Activated T-helper 1 cell treated with anti-CD3 and anti-CD28 coated beads, Interleukin-12 subunit alpha, Interleukin-12 subunit beta, Interleukin-2, Interleukin-4 antibody, amounts not matched to agents 30 ng/mL and 10 ng/mL and 1 ng/mL, durations not matched to agents 14 hours and 24 hours and 36 hours (primary cell): ENCODE measurements at regions of chr1 and their contacts with region 1.

Region 1: GRCh38 chr1:29235955-29236684 is at the start of gene PTPRU:
- DNase-seq: peak; percentile 75
- H3K4me3 Mint-ChIP-seq: peak within 1 kb of the TSS; percentile 73
- H3K27ac Mint-ChIP-seq: peak within 1 kb of the TSS; percentile 16
- H3K4me1 Mint-ChIP-seq: peaks cover 17% of the 10 kb centered on the region
- H3K27me3 Mint-ChIP-seq: peaks cover 51% of the 10 kb centered on the region
- total RNA-seq, gene PTPRU: 0.67 and 0.76 TPM in 2 replicates

Region 2: DNA sequence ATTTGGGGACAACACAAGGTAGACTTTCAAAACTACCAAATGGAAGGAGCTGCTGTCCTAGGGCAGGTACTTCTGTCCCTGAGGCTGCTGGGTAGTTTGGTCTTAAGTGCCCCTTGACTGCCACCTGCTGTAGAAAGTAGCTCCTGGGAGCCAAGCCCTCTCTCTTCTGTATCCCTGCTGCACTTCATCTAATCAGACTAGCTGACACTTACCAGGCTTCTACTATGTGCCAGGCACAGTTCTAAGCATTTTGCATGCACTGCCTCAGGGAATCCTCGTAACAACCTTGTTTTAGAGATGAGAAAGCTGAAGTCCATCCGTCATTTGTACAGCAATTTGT is 38.6 kb before region 1 on chr1:
- intact Hi-C with region 1: no loop called
- DNase-seq: peak; percentile 31
- H3K4me3 Mint-ChIP-seq: no peak overlapping the region
- H3K27ac Mint-ChIP-seq: no peak overlapping the region
- H3K4me1 Mint-ChIP-seq: peaks cover 11% of the 10 kb centered on the region
- H3K27me3 Mint-ChIP-seq: no peaks in the 10 kb centered on the region

Region 3: GRCh38 chr1:29341936-29342335 is 105.8 kb after region 1 on chr1:
- intact Hi-C with region 1: loop called (anchors 2 kb)
- DNase-seq: no peak
- H3K4me3 Mint-ChIP-seq: no peak overlapping the region
- H3K27ac Mint-ChIP-seq: no peak overlapping the region
- H3K4me1 Mint-ChIP-seq: no peaks in the 10 kb centered on the region
- H3K27me3 Mint-ChIP-seq: peaks cover 19% of the 10 kb centered on the region

Region 4: GRCh38 chr1:29450591-29450990 is 214.5 kb after region 1 on chr1:
- intact Hi-C with region 1: no loop called
- DNase-seq: no peak
- H3K4me3 Mint-ChIP-seq: no peak overlapping the region
- H3K27ac Mint-ChIP-seq: no peak overlapping the region
- H3K4me1 Mint-ChIP-seq: no peaks in the 10 kb centered on the region
- H3K27me3 Mint-ChIP-seq: no peaks in the 10 kb centered on the region

Region 5: GRCh38 chr1:29849038-29849750 is 613.1 kb after region 1 on chr1:
- intact Hi-C with region 1: loop called (anchors 1 kb)
- DNase-seq: peak; percentile 36
- H3K4me3 Mint-ChIP-seq: no peak overlapping the region
- H3K27ac Mint-ChIP-seq: no peak overlapping the region
- H3K4me1 Mint-ChIP-seq: peaks cover 7% of the 10 kb centered on the region
- H3K27me3 Mint-ChIP-seq: no peaks in the 10 kb centered on the region

Region 6: DNA sequence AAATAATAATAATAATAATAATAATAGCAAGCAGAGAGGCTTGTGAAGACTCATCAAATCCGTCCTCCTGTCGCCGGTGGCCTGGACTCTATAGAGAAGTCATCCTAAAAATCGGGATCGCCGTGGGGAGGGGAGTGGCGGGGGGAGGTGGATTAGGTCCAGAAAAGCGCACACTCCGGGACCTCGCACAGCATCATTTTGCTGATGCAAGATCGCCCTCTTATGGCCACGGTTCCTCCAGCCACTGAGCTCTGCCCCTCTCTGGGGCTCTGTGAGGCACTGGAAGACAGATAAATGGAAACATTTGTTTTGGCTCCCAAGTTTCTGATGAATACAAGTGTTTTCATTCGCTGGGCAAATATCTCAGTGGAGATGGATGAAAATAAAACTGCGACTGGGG is 875.3 kb after region 1 on chr1:
- intact Hi-C with region 1: loop called (anchors 5 kb)
- DNase-seq: peak; percentile 2
- H3K4me3 Mint-ChIP-seq: no peak overlapping the region
- H3K27ac Mint-ChIP-seq: no peak overlapping the region
- H3K4me1 Mint-ChIP-seq: no peaks in the 10 kb centered on the region
- H3K27me3 Mint-ChIP-seq: peaks cover 21% of the 10 kb centered on the region

Region 7: GRCh38 chr1:30379684-30380624 is 1143.8 kb after region 1 on chr1:
- intact Hi-C with region 1: loop called (anchors 1 kb)
- DNase-seq: peak; percentile 41
- H3K4me3 Mint-ChIP-seq: no peak overlapping the region
- H3K27ac Mint-ChIP-seq: no peak overlapping the region
- H3K4me1 Mint-ChIP-seq: no peaks in the 10 kb centered on the region
- H3K27me3 Mint-ChIP-seq: no peaks in the 10 kb centered on the region